B cell (primary cell): ENCODE measurements at regions of chr5 and their contacts with region 1.

Region 1: DNA sequence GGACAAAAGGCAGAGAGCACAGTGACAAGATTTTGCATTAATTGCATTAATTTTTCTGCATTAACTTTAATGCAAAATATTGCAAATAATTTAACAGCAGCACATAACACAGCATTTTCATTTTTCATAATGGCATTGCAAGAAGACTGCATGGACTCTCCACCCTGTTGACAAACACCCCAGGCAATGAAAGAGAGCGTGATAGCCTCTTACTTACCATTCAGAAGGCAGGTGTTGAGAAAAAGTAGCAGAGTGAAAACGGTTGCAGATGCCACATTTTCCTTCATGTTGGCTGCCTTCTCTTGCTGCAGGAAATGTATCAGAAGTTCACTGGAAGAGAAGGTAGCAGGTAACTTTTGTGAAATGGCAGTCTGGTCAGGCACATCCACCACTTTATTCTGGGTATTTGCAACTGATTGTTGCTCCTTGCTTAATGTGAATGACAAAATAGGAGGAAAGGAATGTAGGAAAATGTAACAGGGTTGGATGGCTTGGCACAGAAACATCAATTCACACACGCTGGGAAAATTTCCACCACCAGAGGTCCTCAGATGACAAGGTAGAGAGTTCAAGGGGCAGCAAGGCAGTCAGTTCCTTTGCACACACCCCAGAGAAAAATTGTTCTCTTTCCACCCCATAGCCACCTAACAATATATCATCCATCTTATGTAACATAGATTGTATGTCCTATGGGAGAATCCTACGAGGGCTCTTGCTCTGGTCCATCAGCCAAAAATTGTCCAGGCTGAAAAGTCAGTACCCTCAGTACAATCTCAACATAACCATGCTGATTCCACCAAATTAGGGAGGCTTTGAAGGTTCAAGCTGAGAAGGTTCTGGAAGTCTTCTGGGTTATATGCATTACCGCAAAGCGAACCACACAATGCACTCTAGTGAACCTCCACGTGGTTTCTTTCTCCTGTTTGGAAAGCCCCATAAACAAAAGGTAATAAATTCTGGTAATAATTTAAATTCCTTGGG is 41.9 kb upstream of the AGXT2 start:
- DNase-seq: peak; percentile 63
- ATAC-seq: no peak
- H3K4me3 ChIP-seq: no peak overlapping the region
- H3K4me3 Mint-ChIP-seq: no peak overlapping the region
- H3K27ac ChIP-seq: no peak overlapping the region
- H3K27ac Mint-ChIP-seq: no peak overlapping the region
- H3K4me1 ChIP-seq: no peaks in the 10 kb centered on the region
- H3K4me1 Mint-ChIP-seq: no peaks in the 10 kb centered on the region
- H3K27me3 ChIP-seq: peaks cover 0 to 2% (median 0%) of the 10 kb centered on the region in 4 experiments
- H3K27me3 Mint-ChIP-seq: no peaks in the 10 kb centered on the region
- CTCF ChIP-seq: peak; percentile 84

Region 2: GRCh38 chr5:35202319-35203111 is 112.9 kb after region 1 on chr5:
- CTCF ChIA-PET with region 1: interaction called, 12 read pairs
- POLR2A ChIA-PET with region 1: no interaction called
- intact Hi-C with region 1: no loop called
- DNase-seq: peak; percentile 68
- ATAC-seq: peak; percentile 74
- H3K4me3 ChIP-seq: no peak overlapping the region
- H3K4me3 Mint-ChIP-seq: no peak overlapping the region
- H3K27ac ChIP-seq: no peak overlapping the region
- H3K27ac Mint-ChIP-seq: no peak overlapping the region
- H3K4me1 ChIP-seq: no peaks in the 10 kb centered on the region
- H3K4me1 Mint-ChIP-seq: peaks cover 2% of the 10 kb centered on the region
- H3K27me3 ChIP-seq: peaks cover 0 to 5% (median 3%) of the 10 kb centered on the region in 4 experiments
- H3K27me3 Mint-ChIP-seq: peaks cover 24% of the 10 kb centered on the region
- CTCF ChIP-seq: peak; percentile 74